ENCODE measurements at regions of chr10 and their contacts with region 1.

Region 1: DNA sequence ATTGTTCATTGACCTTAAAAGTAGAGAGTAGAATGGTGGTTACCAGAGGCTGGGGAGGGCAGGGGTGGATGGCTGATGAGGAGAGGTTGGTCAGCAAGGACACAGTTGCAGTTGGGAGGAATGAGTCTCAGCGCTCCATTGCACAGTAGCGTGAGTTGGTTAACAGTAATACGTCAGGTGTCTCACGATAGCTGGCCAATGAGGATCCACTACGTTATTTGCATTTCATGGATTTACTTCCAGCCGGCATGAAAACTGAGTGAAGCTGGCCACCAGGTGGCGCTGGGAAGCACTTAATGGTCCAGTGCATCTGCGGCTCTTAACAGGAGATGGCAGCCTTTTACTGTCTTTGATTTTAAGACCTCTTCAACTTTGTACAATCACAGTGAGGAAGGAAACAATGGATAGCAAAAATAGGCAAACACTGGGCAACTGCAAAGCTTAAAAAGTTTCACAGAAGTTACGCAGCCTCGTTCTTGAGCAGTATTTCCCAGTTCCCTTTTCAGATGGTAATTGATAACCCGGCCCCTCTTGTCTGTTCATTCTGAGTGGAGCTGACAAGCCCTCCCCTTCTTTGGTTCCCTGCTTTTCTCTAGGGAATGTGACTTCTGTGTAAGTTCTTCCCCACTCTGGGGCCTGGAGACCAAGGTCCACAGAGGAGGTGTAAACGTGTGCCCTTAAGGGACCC is 23.7 kb downstream of the AKR1E2 start:
- DNase-seq: peak; percentile 96
- ATAC-seq: peak; percentile 89
- H3K4me3 ChIP-seq: no peak overlapping the region
- H3K27ac ChIP-seq: no peak overlapping the region
- H3K4me1 ChIP-seq: peaks cover 9% of the 10 kb centered on the region
- H3K27me3 ChIP-seq: no peaks in the 10 kb centered on the region
- CTCF ChIP-seq: peak; percentile 100; the same call in 1 of the 2 replicates
- POLR2A ChIP-seq: no peak
- RAD21 ChIP-seq: peak; percentile 100

Region 2: DNA sequence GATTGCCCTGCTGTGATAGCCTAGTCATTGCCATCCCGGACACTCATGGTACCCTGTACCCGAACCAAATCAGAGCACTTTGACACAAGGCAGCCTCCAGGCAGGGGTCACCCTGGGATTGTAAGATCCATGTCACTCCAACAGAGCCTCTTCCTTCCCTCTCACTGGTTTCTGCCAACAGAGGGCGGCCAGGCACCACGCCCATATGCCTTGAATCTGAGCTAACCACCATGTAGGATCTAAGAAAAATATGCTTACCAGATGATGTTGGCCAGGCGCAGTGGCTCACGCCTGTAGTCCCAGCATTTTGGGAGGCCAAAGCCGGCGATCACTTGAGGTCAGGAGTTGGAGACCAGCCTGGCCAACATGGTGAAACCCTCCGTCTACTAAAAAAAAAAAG is 675.5 kb before region 1 on chr10:
- CTCF ChIA-PET with region 1: no interaction called
- POLR2A ChIA-PET with region 1: no interaction called
- dilution Hi-C with region 1: no loop called
- in situ Hi-C with region 1: no loop called
- intact Hi-C with region 1: no loop called
- DNase-seq: no peak
- ATAC-seq: no peak
- H3K4me3 ChIP-seq: no peak overlapping the region
- H3K27ac ChIP-seq: no peak overlapping the region
- H3K4me1 ChIP-seq: no peaks in the 10 kb centered on the region
- H3K27me3 ChIP-seq: no peaks in the 10 kb centered on the region
- CTCF ChIP-seq: no peak
- POLR2A ChIP-seq: no peak
- RAD21 ChIP-seq: no peak

Region 3: DNA sequence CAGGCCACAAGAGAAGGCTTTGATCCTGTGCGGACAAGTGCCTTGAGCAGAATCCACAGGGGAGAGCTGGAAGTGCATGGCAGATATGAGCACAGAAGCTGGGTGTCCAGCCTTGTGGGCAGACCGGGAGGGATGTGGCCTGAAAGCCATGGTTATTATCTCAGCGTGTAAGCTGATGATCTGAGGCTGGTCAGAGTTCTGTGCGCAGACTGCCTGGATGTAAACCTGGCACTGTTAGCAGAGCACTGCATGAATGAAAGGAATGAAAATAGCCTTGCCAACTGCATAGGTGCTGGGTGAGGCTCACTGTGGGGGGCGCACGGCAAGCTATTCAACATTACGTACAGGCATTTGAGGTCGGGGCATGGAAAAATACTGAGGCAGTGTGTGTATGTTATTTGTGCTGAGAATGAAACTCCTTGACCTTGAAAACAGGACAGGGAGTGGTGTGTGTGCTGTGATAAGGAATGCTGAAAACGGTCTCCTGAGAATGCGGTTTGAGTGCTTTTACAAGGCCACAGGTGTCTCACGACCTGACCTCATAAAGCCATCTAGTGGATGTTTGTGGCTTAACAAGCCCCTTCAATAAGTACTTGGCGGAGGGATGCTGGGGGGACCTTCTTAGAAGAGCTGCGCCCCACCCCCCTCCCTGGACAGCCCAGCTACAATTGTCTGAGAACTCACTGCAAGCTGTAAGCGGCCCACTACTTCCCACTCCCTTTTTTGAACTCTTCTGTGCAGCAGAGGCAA is 132.2 kb after region 1 on chr10:
- CTCF ChIA-PET with region 1: interaction called, 12 read pairs
- POLR2A ChIA-PET with region 1: no interaction called
- dilution Hi-C with region 1: no loop called
- in situ Hi-C with region 1: no loop called
- intact Hi-C with region 1: loop called (anchors 1 kb)
- DNase-seq: peak; percentile 37
- ATAC-seq: peak; percentile 18; the same call in 1 of the 2 replicates
- H3K4me3 ChIP-seq: no peak overlapping the region
- H3K27ac ChIP-seq: no peak overlapping the region
- H3K4me1 ChIP-seq: peaks cover 4% of the 10 kb centered on the region; the same call in 1 of the 2 replicates
- H3K27me3 ChIP-seq: no peaks in the 10 kb centered on the region
- CTCF ChIP-seq: peak; percentile 42
- POLR2A ChIP-seq: no peak
- RAD21 ChIP-seq: peak; percentile 41

Region 4: DNA sequence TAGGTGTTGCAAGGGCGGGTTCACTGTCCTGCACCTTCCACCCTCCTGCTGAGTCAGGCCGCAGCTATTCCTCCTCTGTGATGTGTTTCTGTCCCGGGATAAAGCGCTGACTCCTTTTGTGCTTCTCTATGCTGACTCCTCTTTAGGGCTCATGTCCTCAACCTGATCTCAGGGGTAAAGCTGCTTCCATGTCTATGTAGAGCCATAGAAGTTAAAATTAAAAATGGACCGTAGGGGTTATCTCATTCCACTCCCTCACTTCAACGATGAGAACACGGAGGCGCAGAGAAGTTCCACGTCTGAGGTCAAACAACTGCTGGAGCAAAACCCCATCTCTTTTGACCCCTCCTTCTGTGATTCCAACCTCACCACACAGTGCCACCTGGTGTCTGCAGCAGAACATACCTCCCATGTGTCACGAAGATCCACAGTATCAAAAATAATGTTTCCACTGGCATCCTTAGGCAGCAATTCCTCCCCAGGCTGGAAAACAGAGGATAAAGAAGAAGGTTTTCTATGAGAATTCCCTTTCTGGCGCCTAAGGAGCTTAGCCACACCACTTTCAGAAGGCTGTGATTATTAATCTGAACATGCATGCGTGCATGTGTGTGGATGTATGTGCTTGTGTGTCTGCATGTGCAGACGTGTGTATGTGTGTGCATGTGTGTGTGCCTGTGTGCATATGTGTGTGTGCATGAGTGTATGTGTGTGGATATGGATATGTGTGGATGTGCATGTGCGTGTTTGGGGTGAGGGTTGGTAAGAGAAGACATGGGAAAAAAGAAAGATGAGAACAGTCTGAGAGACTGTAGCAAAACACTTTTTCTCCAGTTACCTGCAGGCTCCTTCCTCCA is 433.8 kb after region 1 on chr10:
- CTCF ChIA-PET with region 1: interaction called, 5 read pairs
- POLR2A ChIA-PET with region 1: no interaction called
- dilution Hi-C with region 1: no loop called
- in situ Hi-C with region 1: loop called (anchors 10 kb)
- intact Hi-C with region 1: loop called (anchors 1 kb)
- DNase-seq: peak; percentile 47
- ATAC-seq: peak; percentile 95
- H3K4me3 ChIP-seq: no peak overlapping the region
- H3K27ac ChIP-seq: no peak overlapping the region
- H3K4me1 ChIP-seq: 0 out of 2 replicates have a peak, but pooled peaks cover 1% of the 10 kb centered on the region
- H3K27me3 ChIP-seq: no peaks in the 10 kb centered on the region; the same call in none of the 2 replicates
- CTCF ChIP-seq: peak; percentile 60
- POLR2A ChIP-seq: no peak
- RAD21 ChIP-seq: peak; percentile 60

Region 5: GRCh38 chr10:5434017-5434753 is 584.5 kb after region 1 on chr10:
- CTCF ChIA-PET with region 1: interaction called, 10 read pairs
- POLR2A ChIA-PET with region 1: no interaction called
- dilution Hi-C with region 1: no loop called
- in situ Hi-C with region 1: no loop called
- intact Hi-C with region 1: loop called (anchors 1 kb)
- DNase-seq: peak; percentile 81
- ATAC-seq: peak; percentile 89
- H3K4me3 ChIP-seq: no peak overlapping the region
- H3K27ac ChIP-seq: peak overlapping the region; percentile 74; the same call in 1 of the 2 replicates
- H3K4me1 ChIP-seq: peaks cover 7% of the 10 kb centered on the region
- H3K27me3 ChIP-seq: no peaks in the 10 kb centered on the region
- CTCF ChIP-seq: peak; percentile 74
- POLR2A ChIP-seq: no peak
- RAD21 ChIP-seq: peak; percentile 66

Region 6: GRCh38 chr10:5873515-5873995 is 1023.9 kb after region 1 on chr10:
- CTCF ChIA-PET with region 1: no interaction called
- POLR2A ChIA-PET with region 1: no interaction called
- dilution Hi-C with region 1: no loop called
- in situ Hi-C with region 1: loop called (anchors 25 kb)
- intact Hi-C with region 1: no loop called
- DNase-seq: peak; percentile 70
- ATAC-seq: peak; percentile 89
- H3K4me3 ChIP-seq: no peak overlapping the region
- H3K27ac ChIP-seq: no peak overlapping the region
- H3K4me1 ChIP-seq: 0 out of 2 replicates have a peak, but pooled peaks cover 4% of the 10 kb centered on the region
- H3K27me3 ChIP-seq: no peaks in the 10 kb centered on the region
- CTCF ChIP-seq: peak; percentile 74
- POLR2A ChIP-seq: no peak
- RAD21 ChIP-seq: peak; percentile 62